Lower leg skin (tissue), 4 donors: ENCODE measurements at regions of chr20 and their contacts with region 1.

Region 1: DNA sequence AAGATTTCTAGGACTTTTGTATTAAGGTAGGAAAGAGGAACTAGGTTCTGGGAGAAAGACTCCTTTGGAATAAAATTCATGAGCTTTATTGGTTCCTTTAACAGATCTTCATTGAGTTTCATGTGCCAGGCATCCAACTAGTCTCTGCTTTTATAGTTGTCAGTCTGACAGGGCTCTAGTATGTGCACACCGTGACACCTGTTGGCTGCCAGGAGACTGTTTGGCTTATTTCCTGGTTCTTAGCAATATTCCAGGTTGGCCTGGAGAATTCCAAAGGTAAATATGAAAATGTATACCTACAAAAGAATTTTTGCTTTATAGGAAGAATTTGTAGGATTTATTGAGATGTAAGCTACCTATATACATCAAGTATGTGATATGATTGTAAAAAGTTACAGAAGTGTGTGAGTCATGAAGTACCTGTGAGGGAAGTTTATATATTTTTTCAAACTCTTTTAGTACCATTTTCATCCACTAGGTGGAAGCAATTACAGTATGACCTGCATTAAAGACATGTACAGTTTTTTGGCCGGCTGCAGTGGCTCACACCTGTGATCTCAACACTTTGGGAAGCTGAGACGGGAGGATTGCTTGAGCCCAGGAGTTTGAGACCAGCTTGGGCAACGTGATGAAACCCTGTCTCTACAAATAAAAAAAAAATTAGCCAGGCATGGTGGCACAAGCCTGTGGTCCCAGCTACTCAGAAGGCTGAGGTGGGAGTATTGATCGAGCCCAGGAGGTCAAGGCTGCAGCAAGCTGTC is 35.2 kb downstream of the NDUFAF5 start:
- DNase-seq: no peak
- H3K4me3 ChIP-seq: no peak overlapping the region
- CTCF ChIP-seq: no peak
- POLR2A ChIP-seq: no peak

Region 2: DNA sequence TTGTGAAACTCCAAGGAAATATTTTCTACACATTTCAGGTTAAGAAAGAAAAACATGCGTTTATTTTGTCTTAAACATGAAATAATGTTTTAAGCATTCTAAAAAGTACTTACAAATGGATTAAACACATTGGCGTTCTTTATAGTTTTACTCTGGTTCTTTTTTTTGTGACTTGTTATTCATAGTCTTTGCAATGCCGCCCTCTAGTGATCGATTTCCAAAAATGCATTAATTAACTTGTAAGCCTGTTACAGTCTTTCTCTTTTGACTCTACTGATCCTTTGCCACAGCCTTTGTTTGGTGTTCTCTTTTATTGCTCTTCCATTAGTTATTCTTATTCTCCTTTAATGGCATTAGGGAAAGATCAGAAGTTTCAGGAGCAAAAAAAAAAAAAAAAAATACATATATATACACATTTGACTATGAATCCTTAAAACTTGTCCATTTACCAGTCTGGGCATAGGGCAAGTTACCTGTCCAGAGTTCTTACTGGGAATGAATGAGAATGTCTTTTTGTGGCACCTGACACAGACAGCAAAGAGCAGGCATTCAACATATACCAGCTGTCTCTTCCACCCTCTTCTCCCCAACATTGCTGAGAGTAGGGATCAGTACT is 235.2 kb after region 1 on chr20:
- intact Hi-C with region 1: loop called (anchors 2 kb)
- DNase-seq: peak in 1 of 2 donors; percentile 27
- H3K4me3 ChIP-seq: no peak overlapping the region
- CTCF ChIP-seq: no peak
- POLR2A ChIP-seq: no peak